Gastrocnemius medialis (tissue), 4 donors: ENCODE measurements at regions of chr5 and their contacts with region 1.

Region 1: DNA sequence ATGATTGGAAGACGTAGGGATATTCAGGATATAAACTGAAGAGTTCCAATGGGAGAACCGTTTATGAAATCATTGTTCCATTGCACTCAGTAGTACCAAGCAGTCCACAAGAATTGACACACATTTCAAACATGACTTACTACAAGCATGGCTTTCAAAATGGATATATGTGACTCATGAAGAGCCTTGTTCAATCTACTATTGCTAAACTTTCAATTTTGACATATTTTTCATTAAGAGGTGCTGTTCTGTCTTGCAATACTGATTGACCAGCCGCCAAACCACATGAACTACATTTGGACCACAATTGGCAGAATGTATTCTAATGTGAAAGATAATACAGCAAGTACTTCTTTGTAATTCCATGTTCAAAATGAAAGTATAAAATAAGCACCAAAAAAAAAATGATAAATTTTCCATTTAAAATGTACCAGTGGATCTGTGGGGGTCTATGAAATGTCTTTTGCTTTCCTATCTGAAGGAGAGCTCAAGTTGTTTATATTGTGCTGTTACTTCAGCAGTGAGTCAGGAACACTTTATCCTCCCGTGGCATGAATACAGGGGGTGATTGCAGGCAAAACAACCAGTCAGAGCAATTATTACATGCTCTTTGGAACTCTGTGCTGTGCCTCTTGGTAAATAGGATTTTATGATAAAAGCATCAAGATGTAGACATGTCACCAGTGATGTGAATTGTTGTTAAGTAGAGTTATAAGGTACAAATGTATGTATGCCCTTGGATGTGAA is 366.0 kb downstream of the ARRDC3 start:
- DNase-seq: peak; percentile 62 to 63
- ATAC-seq: peak; percentile 89 to 94
- H3K4me3 ChIP-seq: peak overlapping the region in 3 of 4 donors; percentile 24 to 32 (median 27)
- H3K27ac ChIP-seq: peak overlapping the region; percentile 70 to 81 (median 76)
- H3K4me1 ChIP-seq: peaks cover 41 to 45% of the 10 kb centered on the region in 2 donors
- H3K27me3 ChIP-seq: no peaks in the 10 kb centered on the region
- CTCF ChIP-seq: no peak
- POLR2A ChIP-seq: no peak

Region 2: GRCh38 chr5:90949469-90950358 is 67.4 kb before region 1 on chr5:
- in situ Hi-C with region 1: no loop called
- intact Hi-C with region 1: no loop called
- DNase-seq: no peak
- ATAC-seq: no peak
- H3K4me3 ChIP-seq: no peak overlapping the region
- H3K27ac ChIP-seq: no peak overlapping the region
- H3K4me1 ChIP-seq: no peaks in the 10 kb centered on the region
- H3K27me3 ChIP-seq: no peaks in the 10 kb centered on the region
- CTCF ChIP-seq: no peak
- POLR2A ChIP-seq: no peak

Region 3: DNA sequence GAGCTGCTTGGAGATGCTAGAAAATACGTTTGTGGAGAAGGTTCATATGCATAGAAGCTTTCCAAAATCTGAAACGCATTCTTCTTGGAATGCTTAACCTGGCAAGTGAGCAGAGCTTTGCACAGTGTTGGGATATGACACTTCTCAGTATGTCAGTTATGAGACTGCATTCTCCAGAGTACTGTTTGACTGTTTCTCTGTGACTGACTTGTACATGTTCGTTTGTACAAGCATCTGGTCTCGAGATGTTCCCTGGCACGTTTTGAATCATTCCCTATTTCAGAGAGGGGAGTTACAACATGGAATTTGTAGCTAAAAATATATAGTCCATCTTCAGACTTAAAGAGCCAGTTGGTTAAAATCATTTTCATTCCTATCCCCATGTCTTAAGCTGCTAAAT is 93.6 kb after region 1 on chr5:
- in situ Hi-C with region 1: no loop called
- intact Hi-C with region 1: loop called (anchors 5 kb)
- DNase-seq: peak in 1 of 2 donors; percentile 35
- ATAC-seq: peak; percentile 93 to 97
- H3K4me3 ChIP-seq: no peak overlapping the region
- H3K27ac ChIP-seq: peak overlapping the region; percentile 9 to 58 (median 24)
- H3K4me1 ChIP-seq: peaks cover 19 to 20% of the 10 kb centered on the region in 2 donors
- H3K27me3 ChIP-seq: no peaks in the 10 kb centered on the region
- CTCF ChIP-seq: no peak
- POLR2A ChIP-seq: no peak